Heart right ventricle (tissue), 16 donors: ENCODE measurements at regions of chr14 and their contacts with region 1.

Region 1: GRCh38 chr14:105337966-105338741 is 23.6 kb downstream of the PACS2 start:
- DNase-seq: peak; percentile 73
- ATAC-seq: peak; percentile 64 to 81 (median 73)
- H3K4me3 ChIP-seq: no peak overlapping the region
- H3K27ac ChIP-seq: peak overlapping the region; percentile 26 to 87 (median 71)
- H3K4me1 ChIP-seq: peaks cover 31 to 87% (median 67%) of the 10 kb centered on the region in 9 donors
- H3K27me3 ChIP-seq: no peaks in the 10 kb centered on the region
- CTCF ChIP-seq: no peak

Region 2: GRCh38 chr14:105294142-105294597 is 44.0 kb before region 1 on chr14:
- intact Hi-C with region 1: loop called in 1 of 10 experiments (anchors 5 kb)
- DNase-seq: peak; percentile 74 to 83
- ATAC-seq: peak; percentile 89 to 99 (median 96)
- H3K4me3 ChIP-seq: no peak overlapping the region
- H3K27ac ChIP-seq: peak overlapping the region in 9 of 10 donors; percentile 59 to 85 (median 69)
- H3K4me1 ChIP-seq: peaks cover 10 to 58% (median 34%) of the 10 kb centered on the region in 9 donors
- H3K27me3 ChIP-seq: no peaks in the 10 kb centered on the region
- CTCF ChIP-seq: no peak